ENCODE measurements at regions of chr4 and their contacts with region 1.

Region 1: GRCh38 chr4:71713611-71714203 is 70.2 kb downstream of the GC start:
- DNase-seq: peak; percentile 45
- H3K4me3 ChIP-seq: no peak overlapping the region
- H3K27ac ChIP-seq: no peak overlapping the region
- H3K4me1 ChIP-seq: no peaks in the 10 kb centered on the region
- H3K27me3 ChIP-seq: no peaks in the 10 kb centered on the region
- CTCF ChIP-seq: peak; percentile 30 to 36
- POLR2A ChIP-seq: no peak

Region 2: DNA sequence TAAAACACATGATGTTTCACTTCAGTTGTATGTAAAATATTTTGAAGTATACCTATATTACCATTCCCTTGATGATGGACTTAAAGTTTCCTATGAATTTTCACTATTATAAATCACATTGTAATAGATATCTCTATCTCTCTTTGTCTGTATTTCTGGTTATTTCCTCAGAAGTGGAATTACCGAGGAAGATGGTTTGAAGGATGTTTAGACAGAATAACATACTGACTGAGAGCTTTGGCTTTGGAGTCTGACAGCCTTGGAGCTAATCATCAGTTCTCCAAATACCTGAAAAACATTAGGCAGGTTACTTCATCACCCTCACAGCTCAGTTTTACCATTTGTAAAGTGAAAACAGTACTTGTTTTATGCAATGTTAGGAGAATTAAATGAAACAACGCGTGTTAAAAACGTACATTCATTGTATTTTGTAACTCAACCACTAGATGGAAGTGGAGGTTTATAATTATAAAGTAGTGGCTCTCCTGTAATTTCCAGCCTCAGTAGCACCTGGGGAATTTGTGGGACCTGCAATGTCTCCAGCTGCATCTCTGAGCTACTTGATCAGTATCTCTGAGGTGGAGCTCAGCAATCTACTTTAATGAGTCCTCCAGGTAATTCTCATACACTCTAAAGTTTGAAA is 1061.7 kb before region 1 on chr4:
- CTCF ChIA-PET with region 1: interaction called, 4 read pairs
- POLR2A ChIA-PET with region 1: no interaction called
- dilution Hi-C with region 1: no loop called
- intact Hi-C with region 1: loop called (anchors 1 kb)
- DNase-seq: peak; percentile 55
- H3K4me3 ChIP-seq: no peak overlapping the region
- H3K27ac ChIP-seq: no peak overlapping the region
- H3K4me1 ChIP-seq: peaks cover 12% of the 10 kb centered on the region
- H3K27me3 ChIP-seq: peaks cover 0 to 8% of the 10 kb centered on the region in 2 experiments
- CTCF ChIP-seq: peak; percentile 23 to 29
- POLR2A ChIP-seq: no peak

Region 3: GRCh38 chr4:71184195-71184781 is 529.4 kb before region 1 on chr4:
- CTCF ChIA-PET with region 1: no interaction called
- POLR2A ChIA-PET with region 1: no interaction called
- dilution Hi-C with region 1: no loop called
- intact Hi-C with region 1: loop called (anchors 1 kb)
- DNase-seq: peak; percentile 37
- H3K4me3 ChIP-seq: no peak overlapping the region
- H3K27ac ChIP-seq: no peak overlapping the region
- H3K4me1 ChIP-seq: peaks cover 4% of the 10 kb centered on the region
- H3K27me3 ChIP-seq: peaks cover 25 to 49% of the 10 kb centered on the region in 2 experiments
- CTCF ChIP-seq: peak; percentile 46 to 52
- POLR2A ChIP-seq: no peak

Region 4: DNA sequence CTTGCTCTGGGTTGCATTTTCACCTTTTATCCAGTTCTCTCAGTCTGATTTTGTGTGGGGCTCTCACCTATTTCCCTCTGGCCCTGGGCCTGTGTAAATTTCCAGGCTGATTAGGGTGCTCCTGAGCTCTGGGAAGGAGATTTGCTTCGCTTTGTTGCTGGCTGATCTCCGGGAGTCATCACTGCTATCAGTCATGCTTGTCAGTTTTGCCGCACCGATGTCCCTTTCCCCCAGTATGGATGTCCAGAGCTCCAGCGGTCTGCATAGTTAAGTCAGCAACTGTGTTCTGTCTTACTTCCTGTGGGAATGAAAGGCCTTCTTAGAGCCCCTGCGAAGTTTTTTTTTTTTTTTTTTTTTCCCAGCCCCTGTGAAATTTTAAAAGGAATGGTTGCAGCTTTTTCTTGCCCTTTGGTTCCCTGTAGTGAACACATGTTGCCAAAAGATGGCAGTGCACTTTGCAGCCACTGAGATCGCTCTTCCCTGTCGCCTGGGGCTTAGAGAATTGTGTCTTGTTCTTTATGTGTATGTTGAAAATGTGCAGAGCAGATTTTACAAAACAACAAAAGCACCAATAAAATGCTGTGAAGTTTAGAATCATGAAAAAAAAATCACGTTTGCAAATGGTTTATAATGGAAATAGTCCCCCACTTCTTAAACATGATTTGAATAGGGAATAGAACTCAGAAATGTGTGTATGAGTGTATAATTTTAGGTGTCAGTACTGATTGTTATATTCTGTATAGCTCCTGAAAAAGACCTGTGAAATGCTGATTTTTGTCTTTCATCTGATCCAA is 484.0 kb before region 1 on chr4:
- CTCF ChIA-PET with region 1: interaction called, 5 read pairs
- POLR2A ChIA-PET with region 1: no interaction called
- dilution Hi-C with region 1: no loop called
- intact Hi-C with region 1: loop called (anchors 1 kb)
- DNase-seq: peak; percentile 13
- H3K4me3 ChIP-seq: no peak overlapping the region
- H3K27ac ChIP-seq: no peak overlapping the region
- H3K4me1 ChIP-seq: no peaks in the 10 kb centered on the region
- H3K27me3 ChIP-seq: no peaks in the 10 kb centered on the region
- CTCF ChIP-seq: peak; percentile 17 to 56
- POLR2A ChIP-seq: no peak

Region 5: DNA sequence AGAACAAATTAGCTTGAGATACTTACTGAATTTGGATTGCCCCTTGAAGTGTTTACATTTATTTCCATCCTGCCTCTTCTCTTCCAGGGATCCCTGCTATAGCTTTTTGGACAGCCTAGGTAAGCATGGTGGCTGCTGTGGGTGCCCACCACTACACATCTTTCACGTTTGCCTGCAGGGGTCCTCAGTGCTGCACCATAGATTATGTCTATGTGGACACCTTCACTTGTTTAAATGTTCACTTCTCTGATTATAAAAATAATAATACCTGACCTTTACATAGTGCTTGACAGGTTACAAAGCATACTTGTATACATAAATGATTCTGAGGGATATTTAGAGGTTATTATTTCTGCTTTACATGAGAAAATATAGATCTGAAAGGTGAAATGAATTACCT is 442.8 kb before region 1 on chr4:
- CTCF ChIA-PET with region 1: interaction called, 3 read pairs
- POLR2A ChIA-PET with region 1: no interaction called
- dilution Hi-C with region 1: no loop called
- intact Hi-C with region 1: loop called (anchors 1 kb)
- DNase-seq: peak; percentile 4
- H3K4me3 ChIP-seq: no peak overlapping the region
- H3K27ac ChIP-seq: no peak overlapping the region
- H3K4me1 ChIP-seq: no peaks in the 10 kb centered on the region
- H3K27me3 ChIP-seq: no peaks in the 10 kb centered on the region
- CTCF ChIP-seq: peak; percentile 14 to 19
- POLR2A ChIP-seq: no peak